GM10248 (cell line): ENCODE measurements at regions of chr1 and their contacts with region 1.

Region 1: GRCh38 chr1:54070171-54070837 is 16.9 kb downstream of the TCEANC2 start:
- DNase-seq: peak; percentile 65
- CTCF ChIP-seq: peak; percentile 80

Region 2: GRCh38 chr1:54081306-54082270 is 11.3 kb after region 1 on chr1:
- CTCF ChIA-PET with region 1: interaction called, 20 read pairs
- POLR2A ChIA-PET with region 1: no interaction called
- DNase-seq: peak; percentile 66
- CTCF ChIP-seq: peak; percentile 65